K562 (cell line): ENCODE measurements at regions of chr7 and their contacts with region 1.

Region 1: DNA sequence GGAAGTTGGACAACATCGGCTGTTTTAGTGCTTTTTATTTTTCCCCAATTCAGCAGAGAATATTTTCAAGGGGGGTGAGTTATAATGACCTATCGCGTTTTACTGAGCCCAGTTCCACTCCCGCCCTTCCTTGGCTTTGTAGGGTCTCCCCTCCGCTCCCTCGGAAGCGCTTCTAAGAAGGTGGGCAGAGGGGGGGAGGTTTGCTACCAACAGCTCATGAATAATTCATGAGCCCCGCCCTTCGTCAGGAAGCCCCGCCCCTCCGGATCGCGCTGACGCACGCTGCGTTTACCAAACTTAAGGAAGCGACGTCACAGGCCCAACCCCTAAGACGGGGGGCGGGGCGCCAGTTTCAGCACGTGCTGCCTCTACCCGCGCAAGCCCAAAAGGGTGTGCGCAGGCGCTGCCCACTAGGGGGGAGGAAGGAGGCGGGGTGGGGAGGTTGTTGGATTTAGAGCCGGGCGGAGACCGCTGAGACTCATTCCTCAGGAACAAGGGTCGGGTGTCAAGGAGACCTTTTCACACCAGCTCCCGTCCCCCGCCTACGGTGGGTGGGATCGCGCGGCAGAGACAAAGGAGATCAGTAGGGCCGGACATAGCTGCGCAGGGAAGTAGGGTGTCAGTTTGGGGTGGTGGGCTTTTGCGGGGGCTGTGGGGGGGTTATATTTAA is 529 bp upstream of the MEPCE start:
- DNase-seq: peak; percentile 91 to 100 (median 95)
- ATAC-seq: peak; percentile 73
- H3K4me3 ChIP-seq: peak overlapping the region; percentile 82
- H3K27ac ChIP-seq: peak overlapping the region; percentile 98
- H3K4me1 ChIP-seq: peaks cover 33 to 50% of the 10 kb centered on the region in 2 experiments
- H3K27me3 ChIP-seq: no peaks in the 10 kb centered on the region
- CTCF ChIP-seq: peak in 1 of 3 experiments; percentile 17; a peak in 1 of 6 replicates
- EP300 ChIP-seq: peak; percentile 50
- POLR2A ChIP-seq: peak; percentile 96
- RAD21 ChIP-seq: no peak; a peak in 1 of 4 replicates

Region 2: DNA sequence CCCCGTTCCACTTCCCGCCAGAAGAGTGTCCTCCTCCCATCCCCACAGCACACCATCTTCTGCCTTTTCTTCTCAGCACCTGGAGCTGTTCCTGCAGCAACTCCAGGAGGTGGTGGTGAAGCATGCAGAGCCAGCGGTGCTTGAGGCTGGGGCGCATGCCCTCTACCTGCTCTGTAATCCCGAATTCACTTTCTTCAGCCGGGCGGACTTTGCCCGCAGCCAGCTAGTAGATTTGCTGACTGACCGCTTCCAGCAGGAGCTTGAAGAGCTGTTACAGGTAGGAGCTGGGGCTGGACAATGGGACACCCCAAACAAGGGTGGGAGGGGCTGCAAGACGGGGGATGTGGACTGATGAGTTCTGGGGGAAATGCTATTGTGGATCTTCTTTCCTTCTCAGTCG is 228.4 kb before region 1 on chr7:
- CTCF ChIA-PET with region 1: no interaction called
- POLR2A ChIA-PET with region 1: no interaction called
- in situ Hi-C with region 1: no loop called
- intact Hi-C with region 1: no loop called
- DNase-seq: no peak
- ATAC-seq: no peak; the same call in 2 of the 3 replicates
- H3K4me3 ChIP-seq: no peak overlapping the region
- H3K27ac ChIP-seq: no peak overlapping the region
- H3K4me1 ChIP-seq: peaks cover 17 to 24% of the 10 kb centered on the region in 2 experiments; a peak in 4 of 5 replicates
- H3K27me3 ChIP-seq: no peaks in the 10 kb centered on the region
- CTCF ChIP-seq: no peak
- EP300 ChIP-seq: no peak
- POLR2A ChIP-seq: no peak
- RAD21 ChIP-seq: no peak

Region 3: GRCh38 chr7:100366411-100367238 is 62.5 kb before region 1 on chr7:
- CTCF ChIA-PET with region 1: no interaction called
- POLR2A ChIA-PET with region 1: no interaction called
- in situ Hi-C with region 1: no loop called
- intact Hi-C with region 1: no loop called
- DNase-seq: peak in 2 of 4 experiments; percentile 20 to 23
- ATAC-seq: peak; percentile 2
- H3K4me3 ChIP-seq: no peak overlapping the region
- H3K27ac ChIP-seq: no peak overlapping the region
- H3K4me1 ChIP-seq: peaks cover 7 to 14% of the 10 kb centered on the region in 2 experiments; a peak in 4 of 5 replicates
- H3K27me3 ChIP-seq: no peaks in the 10 kb centered on the region
- CTCF ChIP-seq: no peak
- EP300 ChIP-seq: no peak
- POLR2A ChIP-seq: peak; percentile 66
- RAD21 ChIP-seq: no peak

Region 4: DNA sequence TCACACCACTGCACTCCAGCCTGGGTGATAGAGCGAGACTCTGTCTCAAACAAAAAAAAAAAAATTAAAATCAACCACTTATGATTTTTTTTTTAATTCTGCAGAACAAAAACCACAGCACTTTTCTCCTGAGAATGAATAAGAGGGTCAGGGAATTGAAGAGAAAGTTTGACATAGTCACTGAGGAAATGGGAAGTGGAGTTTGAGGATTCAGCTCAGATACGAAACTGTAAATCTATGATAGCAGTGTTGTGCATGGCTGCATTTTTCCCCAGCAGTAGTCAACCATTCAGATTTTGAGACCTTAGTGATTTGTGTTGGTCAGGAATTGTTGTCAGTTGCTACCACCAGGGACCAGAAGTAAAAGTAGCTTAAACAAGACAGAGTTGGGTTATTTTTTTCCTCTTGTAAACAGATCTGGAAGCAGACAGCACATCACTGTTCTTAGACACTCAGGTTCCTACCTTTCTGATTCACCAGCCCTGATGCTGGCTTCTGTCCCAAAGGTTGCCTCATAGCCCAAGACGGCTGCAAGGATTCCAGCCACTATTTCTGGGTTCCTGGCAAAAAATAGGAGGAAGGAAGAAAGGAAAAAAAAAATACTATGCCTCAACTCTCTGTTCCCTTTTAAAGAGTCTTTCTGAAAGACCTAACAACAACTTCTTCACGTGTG is 35.7 kb before region 1 on chr7:
- CTCF ChIA-PET with region 1: no interaction called
- POLR2A ChIA-PET with region 1: no interaction called
- in situ Hi-C with region 1: no loop called
- intact Hi-C with region 1: no loop called
- DNase-seq: no peak
- ATAC-seq: no peak
- H3K4me3 ChIP-seq: no peak overlapping the region
- H3K27ac ChIP-seq: no peak overlapping the region
- H3K4me1 ChIP-seq: peaks cover 0 to 11% of the 10 kb centered on the region in 2 experiments; a peak in 2 of 5 replicates
- H3K27me3 ChIP-seq: peaks cover 18 to 24% of the 10 kb centered on the region in 2 experiments; a peak in 4 of 5 replicates
- CTCF ChIP-seq: no peak
- EP300 ChIP-seq: no peak
- POLR2A ChIP-seq: no peak
- RAD21 ChIP-seq: no peak

Region 5: DNA sequence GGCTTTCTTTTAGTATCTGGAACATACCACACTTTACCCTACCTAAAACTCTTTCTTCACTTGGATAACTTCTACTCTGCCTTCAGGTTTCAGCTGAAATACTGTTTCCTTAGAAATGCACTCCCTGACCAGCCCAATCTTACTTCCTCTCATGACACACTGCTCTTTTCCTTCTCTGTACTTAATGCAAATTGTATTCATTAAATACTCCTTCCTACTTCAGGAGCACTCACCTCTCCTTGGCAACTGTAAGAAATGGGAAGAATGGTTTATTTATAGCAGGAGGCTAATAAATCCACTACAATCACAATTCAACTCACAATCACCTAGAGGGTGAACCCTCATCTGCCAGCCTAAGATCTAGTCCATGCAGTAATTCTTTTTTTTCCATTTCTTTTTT is 15.8 kb before region 1 on chr7:
- CTCF ChIA-PET with region 1: no interaction called
- POLR2A ChIA-PET with region 1: interaction called, 33 read pairs
- in situ Hi-C with region 1: no loop called
- intact Hi-C with region 1: no loop called
- DNase-seq: no peak
- ATAC-seq: peak; percentile 36; the same call in 1 of the 3 replicates
- H3K4me3 ChIP-seq: no peak overlapping the region
- H3K27ac ChIP-seq: no peak overlapping the region
- H3K4me1 ChIP-seq: no peaks in the 10 kb centered on the region
- H3K27me3 ChIP-seq: peaks cover 11 to 20% of the 10 kb centered on the region in 2 experiments; a peak in 4 of 5 replicates
- CTCF ChIP-seq: no peak
- EP300 ChIP-seq: no peak
- POLR2A ChIP-seq: no peak
- RAD21 ChIP-seq: no peak

Region 6: DNA sequence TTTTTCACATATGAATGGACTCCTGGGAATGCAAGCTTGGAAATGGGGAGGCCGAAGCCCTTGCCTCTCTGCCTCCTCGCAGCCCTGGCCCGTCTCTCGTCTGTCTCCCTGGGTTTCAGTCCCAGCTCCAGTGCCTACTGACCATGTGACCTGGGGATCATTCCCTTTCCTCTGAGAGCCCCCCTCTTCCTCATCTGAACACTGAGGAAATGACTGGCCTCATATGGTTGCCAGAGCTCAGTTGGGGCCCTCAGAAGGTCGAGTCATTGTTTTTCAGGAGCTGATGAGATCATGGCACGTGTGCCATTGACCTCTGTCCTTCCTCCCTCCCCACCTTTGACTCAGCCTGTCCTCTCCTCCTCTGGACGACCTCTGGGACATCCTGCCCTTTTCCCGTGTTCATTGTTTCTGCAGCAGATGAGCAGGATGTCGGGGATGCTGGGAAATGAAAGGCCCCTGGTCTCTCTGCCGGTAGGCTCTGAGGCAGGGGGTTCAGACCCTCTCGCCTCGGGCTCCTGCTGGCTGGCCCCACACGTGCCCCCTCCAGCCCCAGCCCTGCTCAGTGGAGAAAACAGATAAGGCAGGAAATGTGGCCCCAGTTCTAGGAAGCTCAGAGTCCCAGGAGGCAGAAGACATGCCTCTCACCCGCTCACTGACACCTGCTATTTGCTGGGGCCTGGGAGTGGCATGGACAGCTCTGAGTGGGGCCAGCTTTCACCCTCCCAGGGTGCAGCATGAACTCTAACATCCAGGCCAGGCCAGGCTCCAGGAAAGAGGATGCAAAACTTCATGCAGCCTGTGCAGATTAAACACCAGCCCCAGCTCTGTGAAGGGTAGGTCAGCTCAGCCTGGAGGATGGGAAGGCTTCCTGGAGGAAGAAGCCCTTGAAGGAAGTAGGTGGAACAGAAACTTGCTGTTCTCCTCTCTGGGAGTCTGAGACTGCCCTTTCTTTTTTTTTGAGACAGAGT is 15.5 kb after region 1 on chr7:
- CTCF ChIA-PET with region 1: no interaction called
- POLR2A ChIA-PET with region 1: interaction called, 58 read pairs
- in situ Hi-C with region 1: no loop called
- intact Hi-C with region 1: loop called (anchors 2 kb)
- DNase-seq: peak; percentile 81 to 90 (median 84)
- ATAC-seq: peak; percentile 84
- H3K4me3 ChIP-seq: no peak overlapping the region
- H3K27ac ChIP-seq: peak overlapping the region; percentile 91
- H3K4me1 ChIP-seq: peaks cover 29 to 49% of the 10 kb centered on the region in 2 experiments
- H3K27me3 ChIP-seq: no peaks in the 10 kb centered on the region
- CTCF ChIP-seq: no peak
- EP300 ChIP-seq: peak; percentile 26
- POLR2A ChIP-seq: peak; percentile 70
- RAD21 ChIP-seq: no peak

Region 7: GRCh38 chr7:100476903-100477870 is 48.1 kb after region 1 on chr7:
- CTCF ChIA-PET with region 1: no interaction called
- POLR2A ChIA-PET with region 1: interaction called, 10 read pairs
- in situ Hi-C with region 1: no loop called
- intact Hi-C with region 1: no loop called
- DNase-seq: peak in 3 of 4 experiments; percentile 55 to 65 (median 65)
- ATAC-seq: peak; percentile 14
- H3K4me3 ChIP-seq: peak overlapping the region; percentile 86
- H3K27ac ChIP-seq: peak overlapping the region; percentile 82
- H3K4me1 ChIP-seq: peaks cover 44 to 77% of the 10 kb centered on the region in 2 experiments
- H3K27me3 ChIP-seq: no peaks in the 10 kb centered on the region
- CTCF ChIP-seq: peak; percentile 49 to 64 (median 58)
- EP300 ChIP-seq: no peak
- POLR2A ChIP-seq: no peak
- RAD21 ChIP-seq: no peak

Region 8: DNA sequence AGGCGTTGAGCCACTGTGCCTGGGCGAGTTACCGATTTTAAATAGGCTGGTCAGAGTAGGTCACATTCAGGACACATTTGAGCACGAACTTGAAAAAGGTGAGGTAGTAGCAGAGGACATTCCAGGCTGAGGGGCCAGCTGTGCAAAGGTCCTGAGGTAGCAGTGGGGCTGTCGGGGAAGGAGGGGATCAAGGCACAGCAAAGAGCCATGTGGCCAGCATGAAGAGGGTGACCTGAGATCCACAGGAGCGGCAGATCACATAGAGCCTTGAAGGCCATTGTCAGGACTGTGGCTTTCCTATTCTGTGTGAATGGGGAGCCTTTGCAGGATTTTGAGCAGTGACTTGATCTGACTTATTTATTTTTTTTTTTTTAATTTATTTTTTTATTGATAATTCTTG is 310.8 kb after region 1 on chr7:
- CTCF ChIA-PET with region 1: no interaction called
- POLR2A ChIA-PET with region 1: no interaction called
- in situ Hi-C with region 1: no loop called
- intact Hi-C with region 1: no loop called
- DNase-seq: no peak
- ATAC-seq: no peak
- H3K4me3 ChIP-seq: no peak overlapping the region
- H3K27ac ChIP-seq: no peak overlapping the region
- H3K4me1 ChIP-seq: peaks cover 0 to 7% of the 10 kb centered on the region in 2 experiments; a peak in 2 of 5 replicates
- H3K27me3 ChIP-seq: peaks cover 2 to 23% of the 10 kb centered on the region in 2 experiments; a peak in 3 of 5 replicates
- CTCF ChIP-seq: no peak
- EP300 ChIP-seq: no peak
- POLR2A ChIP-seq: no peak
- RAD21 ChIP-seq: no peak